Posterior vena cava (tissue), 2 donors: ENCODE measurements at regions of chrX and their contacts with region 1.

Region 1: DNA sequence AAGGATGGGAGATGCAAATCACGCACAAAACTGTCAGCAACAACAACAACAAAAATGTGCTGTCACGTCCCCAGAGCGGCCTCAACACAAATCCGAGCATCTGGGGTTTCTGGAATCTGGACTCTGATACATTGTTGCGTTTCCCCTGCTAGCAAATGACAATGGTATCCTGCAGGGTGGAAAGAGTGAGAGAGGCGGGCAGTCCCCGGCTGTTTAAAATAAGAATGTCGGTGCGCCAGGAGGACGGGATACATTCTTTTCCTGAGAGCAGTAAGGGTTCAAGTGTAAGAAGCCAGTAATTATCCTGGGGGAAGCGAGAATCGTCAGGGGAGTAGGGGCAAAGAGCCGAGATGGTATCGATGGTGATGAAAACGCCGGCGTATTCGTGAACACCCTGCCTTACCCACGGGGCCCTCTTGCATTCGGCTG is 310.2 kb downstream of the ASMT start:
- DNase-seq: no peak

Region 2: DNA sequence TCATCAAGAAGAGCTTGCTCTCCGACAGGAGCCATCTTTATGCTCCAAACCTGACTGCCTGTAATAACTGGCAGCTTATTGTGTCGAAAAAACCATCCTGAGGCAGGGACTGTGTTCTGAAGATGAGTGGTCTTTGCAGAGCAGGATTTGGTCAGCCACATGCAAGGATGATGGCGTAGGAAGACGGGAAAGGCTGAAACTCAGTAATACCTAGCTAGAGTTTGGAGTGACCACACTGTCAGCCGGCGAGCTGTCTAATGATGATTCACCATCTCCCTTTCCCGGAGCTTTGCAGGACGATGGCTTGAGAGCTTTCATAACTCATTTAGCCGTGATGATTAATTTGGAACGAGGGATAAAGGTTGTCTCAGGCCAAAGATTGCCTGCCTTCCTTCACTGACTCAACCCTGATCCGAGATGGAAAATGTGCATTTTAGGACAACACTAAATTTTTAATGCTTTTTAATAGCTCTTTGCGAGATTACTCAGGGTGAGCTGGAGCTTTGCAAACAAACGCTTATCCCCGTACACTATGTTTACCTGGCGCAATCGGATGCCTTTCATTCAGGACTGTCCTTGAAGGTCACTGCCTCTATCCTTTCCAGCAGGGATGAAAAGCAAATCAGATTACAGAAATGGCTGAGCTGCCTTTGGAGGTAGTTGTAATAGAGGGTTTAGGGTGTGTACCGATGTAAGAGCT is 21.7 kb before region 1 on chrX:
- intact Hi-C with region 1: loop called in 1 of 2 experiments (anchors 1 kb)
- DNase-seq: no peak

Region 3: DNA sequence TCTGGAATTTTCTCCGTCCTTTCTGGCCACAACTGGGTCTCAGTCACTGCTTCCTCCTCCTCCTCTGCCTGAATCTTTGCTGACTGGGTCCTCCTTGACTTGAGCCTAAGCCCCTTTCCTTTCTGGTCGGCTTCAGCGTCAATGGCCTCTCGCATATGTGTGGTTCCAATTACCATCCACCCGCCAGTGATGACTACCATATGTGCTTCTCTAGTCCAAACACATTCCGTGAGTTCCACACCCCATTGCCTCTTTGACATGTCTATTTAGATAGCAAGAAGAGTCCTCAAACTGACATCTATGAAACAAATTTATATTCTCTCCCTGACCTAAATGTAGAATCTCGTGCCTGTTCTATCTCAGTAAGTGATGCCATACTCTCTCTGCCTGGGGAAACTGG is 1401.6 kb after region 1 on chrX:
- intact Hi-C with region 1: no loop called
- DNase-seq: no peak